ENCODE measurements at regions of chr9 and their contacts with region 1.

Region 1: GRCh38 chr9:13351778-13352386 is 72.4 kb upstream of the MPDZ start:
- DNase-seq: no peak
- ATAC-seq: peak; percentile 69

Region 2: GRCh38 chr9:13380903-13381302 is 29.0 kb after region 1 on chr9:
- intact Hi-C with region 1: loop called (anchors 2 kb)
- DNase-seq: no peak
- ATAC-seq: no peak

Region 3: DNA sequence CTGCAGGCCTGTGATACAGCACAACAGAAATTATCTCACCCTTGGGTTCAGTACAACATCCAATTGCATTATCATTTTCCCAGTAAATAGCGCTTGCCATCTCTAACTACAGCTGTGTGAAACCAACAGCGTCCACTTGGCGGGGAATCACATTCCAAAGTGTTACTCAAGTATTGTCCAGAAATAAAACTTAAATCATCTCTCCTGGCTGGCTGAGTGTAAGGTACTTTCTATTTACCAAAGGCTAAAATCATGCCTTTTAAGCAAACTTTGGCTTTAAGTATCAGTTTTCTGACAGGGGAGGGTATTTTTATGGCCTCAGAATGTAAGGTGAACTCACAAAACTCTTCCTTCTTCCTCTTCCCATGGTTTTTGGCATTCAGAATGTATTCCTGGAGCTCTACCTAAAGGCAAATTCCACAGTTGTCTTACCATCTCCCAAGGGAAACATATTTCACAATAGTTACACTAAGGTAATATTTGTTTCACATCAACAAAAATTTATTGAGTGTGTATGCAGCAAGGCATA is 133.2 kb after region 1 on chr9:
- intact Hi-C with region 1: no loop called
- DNase-seq: peak; percentile 63
- ATAC-seq: peak; percentile 95

Region 4: DNA sequence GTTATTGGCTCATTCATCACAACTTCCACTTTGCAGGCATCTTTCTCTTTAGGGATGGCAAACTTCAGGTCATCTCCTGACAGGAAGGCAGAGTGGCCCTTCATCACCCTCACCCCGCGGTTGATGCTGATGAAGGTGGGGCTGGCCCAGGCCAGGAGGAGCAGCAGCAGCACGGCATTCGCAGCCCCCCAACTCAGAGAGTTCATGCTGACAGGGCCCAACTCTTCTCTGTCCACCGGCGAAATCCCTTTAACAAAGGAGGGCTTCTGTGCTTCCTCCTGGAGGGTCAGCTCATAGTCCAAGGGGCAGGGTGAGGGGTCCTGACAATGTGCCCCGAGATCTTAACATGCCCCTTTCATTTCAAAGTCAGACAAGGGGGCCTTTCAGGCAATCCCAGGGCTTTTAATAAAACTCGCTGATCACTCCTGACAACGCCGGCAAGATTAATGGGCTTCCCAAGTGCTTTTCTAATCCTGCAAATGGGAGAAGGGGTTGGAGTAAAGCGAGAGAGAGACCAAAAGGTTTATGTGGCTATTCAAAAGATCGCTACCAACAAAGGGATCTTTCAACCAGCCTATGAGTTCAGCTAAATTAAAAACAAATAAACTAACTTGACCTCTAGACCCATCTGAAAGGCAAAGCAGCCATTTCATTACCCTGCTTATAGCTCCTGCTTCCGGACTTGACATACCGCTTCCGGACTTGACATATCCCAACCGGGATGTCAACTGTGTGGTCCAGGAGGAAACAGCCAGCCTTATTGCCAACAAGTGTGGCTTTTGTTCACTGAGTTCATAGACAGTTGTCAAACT is 1517.1 kb after region 1 on chr9:
- intact Hi-C with region 1: no loop called
- DNase-seq: no peak
- ATAC-seq: peak; percentile 24

Measured in sciatic nerve (tissue), 2 donors.